ENCODE measurements at regions of chr1 and their contacts with region 1.

Region 1: GRCh38 chr1:11059990-11060830 is at the start of gene SRM:
- H3K4me3 ChIP-seq: peak within 1 kb of the TSS; percentile 87
- H3K27ac ChIP-seq: peak within 1 kb of the TSS; percentile 94
- H3K4me1 ChIP-seq: no peaks in the 10 kb centered on the region
- CTCF ChIP-seq: no peak

Region 2: GRCh38 chr1:11072216-11072917 is 12.2 kb after region 1 on chr1:
- CTCF ChIA-PET with region 1: interaction called, 3 read pairs
- POLR2A ChIA-PET with region 1: interaction called, 12 read pairs
- H3K4me3 ChIP-seq: no peak overlapping the region
- H3K27ac ChIP-seq: no peak overlapping the region
- H3K4me1 ChIP-seq: no peaks in the 10 kb centered on the region
- CTCF ChIP-seq: no peak

Region 3: DNA sequence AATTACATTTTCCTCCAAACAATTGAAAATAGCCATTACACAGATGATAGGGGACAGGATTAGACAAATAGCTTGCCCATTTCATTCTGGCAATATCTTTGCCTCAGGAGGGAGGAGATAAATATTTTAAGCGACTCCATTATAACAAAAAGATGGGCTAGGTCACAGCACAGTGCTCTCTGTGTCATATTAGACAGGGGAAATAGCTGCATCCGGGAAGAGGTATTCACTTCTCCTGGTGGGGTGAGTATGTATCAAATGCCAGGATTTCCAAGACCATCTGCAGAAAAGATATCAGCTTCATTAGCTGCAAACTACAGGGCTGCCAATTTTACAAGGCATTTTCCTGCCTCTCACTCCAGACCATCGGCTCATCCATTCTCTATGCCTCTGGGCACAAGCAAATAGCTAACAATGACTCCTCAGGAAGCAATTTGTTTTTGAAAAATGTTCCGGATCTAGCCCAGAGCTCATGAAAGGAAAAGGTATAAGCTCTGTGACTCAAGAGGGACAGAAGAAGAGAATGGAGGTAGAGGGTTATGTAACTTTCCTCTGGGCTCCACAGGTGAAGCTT is 87.1 kb after region 1 on chr1:
- CTCF ChIA-PET with region 1: no interaction called
- POLR2A ChIA-PET with region 1: no interaction called
- H3K4me3 ChIP-seq: no peak overlapping the region
- H3K27ac ChIP-seq: no peak overlapping the region
- H3K4me1 ChIP-seq: no peaks in the 10 kb centered on the region
- CTCF ChIP-seq: no peak

Measured in HEK293 (cell line).